Activated CD8-positive, alpha-beta T cell treated with anti-CD3 and anti-CD28 coated beads for 36 hours (primary cell): ENCODE measurements at regions of chr18 and their contacts with region 1.

Region 1: GRCh38 chr18:801137-801536 is 10.9 kb downstream of the YES1 start:
- DNase-seq: no peak
- ATAC-seq: no peak
- H3K4me3 Mint-ChIP-seq: no peak overlapping the region
- H3K27ac Mint-ChIP-seq: no peak overlapping the region
- H3K4me1 Mint-ChIP-seq: peaks cover 71% of the 10 kb centered on the region
- H3K27me3 Mint-ChIP-seq: no peaks in the 10 kb centered on the region
- CTCF ChIP-seq: no peak

Region 2: DNA sequence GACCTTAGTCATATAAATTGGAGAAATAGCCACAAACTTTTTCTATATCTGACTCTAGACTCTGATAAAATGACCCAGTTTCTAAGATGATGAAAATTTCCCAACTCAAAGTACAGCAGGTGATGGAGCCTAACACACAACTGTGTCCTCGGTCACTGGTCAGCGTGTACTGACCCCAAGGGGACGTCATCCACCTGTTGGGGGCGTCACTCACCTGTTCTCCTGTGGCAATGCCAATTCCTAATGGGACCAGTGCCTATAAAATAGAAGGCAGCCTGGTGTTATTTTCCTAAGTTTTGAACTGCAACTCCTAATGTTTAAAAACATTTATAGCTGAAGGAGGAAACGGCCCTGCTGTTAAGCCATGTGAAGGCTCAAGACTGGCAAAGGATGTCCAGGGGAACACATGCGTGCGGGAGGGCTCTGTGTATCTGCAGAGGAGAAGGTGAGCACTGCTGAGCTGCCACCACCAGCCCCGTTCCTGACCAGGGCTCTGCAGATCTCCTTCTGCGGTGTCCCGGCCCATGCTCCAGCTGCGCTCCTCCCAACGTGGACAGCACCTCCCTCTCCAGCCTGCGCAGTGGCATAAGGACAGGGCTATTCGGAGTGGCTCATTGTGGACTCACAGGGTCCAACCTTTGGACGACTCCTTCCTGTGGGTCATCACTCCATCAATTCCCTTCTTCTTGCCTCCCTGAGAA is 122.5 kb before region 1 on chr18:
- CTCF ChIA-PET with region 1: no interaction called
- POLR2A ChIA-PET with region 1: no interaction called
- intact Hi-C with region 1: no loop called
- DNase-seq: no peak
- ATAC-seq: no peak
- H3K4me3 Mint-ChIP-seq: no peak overlapping the region
- H3K27ac Mint-ChIP-seq: no peak overlapping the region
- H3K4me1 Mint-ChIP-seq: peaks cover 20% of the 10 kb centered on the region
- H3K27me3 Mint-ChIP-seq: no peaks in the 10 kb centered on the region
- CTCF ChIP-seq: no peak

Region 3: DNA sequence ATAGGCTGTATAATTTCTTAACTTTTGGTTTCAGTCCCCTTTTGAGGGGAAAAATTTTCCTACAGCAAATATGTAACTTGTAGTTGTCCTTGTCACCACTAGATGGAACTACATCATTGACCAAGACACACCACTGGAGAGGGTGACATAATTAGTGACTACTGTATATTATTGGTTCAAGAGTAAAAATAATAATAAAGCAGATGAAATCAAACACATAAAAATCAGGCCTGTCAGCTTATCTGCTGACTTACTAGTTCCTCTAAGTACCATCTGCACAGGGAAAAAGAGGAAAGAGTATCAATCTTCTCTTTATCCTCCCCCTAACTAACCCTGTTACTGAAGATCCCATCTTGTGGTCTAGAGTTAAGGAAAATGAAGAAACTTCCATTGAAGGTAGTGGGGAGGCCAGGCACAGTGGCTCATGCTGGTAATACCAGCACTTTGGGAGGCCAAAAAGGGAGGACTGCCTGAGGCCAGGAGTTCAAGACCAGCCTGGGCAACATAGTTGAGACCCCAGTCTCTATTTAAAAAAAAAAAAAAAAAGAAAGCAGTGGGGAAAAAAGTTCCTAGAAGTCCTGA is 59.1 kb before region 1 on chr18:
- CTCF ChIA-PET with region 1: interaction called, 10 read pairs
- POLR2A ChIA-PET with region 1: no interaction called
- intact Hi-C with region 1: no loop called
- DNase-seq: no peak
- ATAC-seq: peak; percentile 83
- H3K4me3 Mint-ChIP-seq: no peak overlapping the region
- H3K27ac Mint-ChIP-seq: no peak overlapping the region
- H3K4me1 Mint-ChIP-seq: peaks cover 2% of the 10 kb centered on the region
- H3K27me3 Mint-ChIP-seq: no peaks in the 10 kb centered on the region
- CTCF ChIP-seq: peak; percentile 74

Region 4: DNA sequence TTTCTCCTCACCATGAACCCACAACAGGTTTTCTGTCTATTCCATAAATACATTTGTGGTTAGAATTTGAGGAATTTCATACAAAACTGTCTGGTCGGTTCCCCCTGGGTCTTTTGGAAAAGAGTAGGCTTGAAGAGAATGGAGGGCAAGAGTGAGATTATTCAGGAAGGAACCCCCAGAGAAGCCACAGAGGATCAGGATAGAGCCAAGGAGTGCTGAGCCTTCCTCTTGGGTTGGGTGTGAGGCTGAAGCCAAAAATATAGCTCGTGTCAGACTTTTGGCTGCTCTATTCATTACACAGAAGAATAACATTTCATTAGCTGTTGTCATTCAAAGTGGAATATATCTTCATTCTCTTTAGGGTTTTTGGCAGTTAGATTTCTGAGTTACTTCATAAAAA is 56.8 kb after region 1 on chr18:
- CTCF ChIA-PET with region 1: no interaction called
- POLR2A ChIA-PET with region 1: no interaction called
- intact Hi-C with region 1: no loop called
- DNase-seq: no peak
- ATAC-seq: no peak
- H3K4me3 Mint-ChIP-seq: no peak overlapping the region
- H3K27ac Mint-ChIP-seq: no peak overlapping the region
- H3K4me1 Mint-ChIP-seq: no peaks in the 10 kb centered on the region
- H3K27me3 Mint-ChIP-seq: peaks cover 5% of the 10 kb centered on the region
- CTCF ChIP-seq: no peak

Region 5: GRCh38 chr18:1094409-1094808 is 293.3 kb after region 1 on chr18:
- CTCF ChIA-PET with region 1: no interaction called
- POLR2A ChIA-PET with region 1: no interaction called
- intact Hi-C with region 1: no loop called
- DNase-seq: no peak
- ATAC-seq: no peak
- H3K4me3 Mint-ChIP-seq: no peak overlapping the region
- H3K27ac Mint-ChIP-seq: no peak overlapping the region
- H3K4me1 Mint-ChIP-seq: no peaks in the 10 kb centered on the region
- H3K27me3 Mint-ChIP-seq: no peaks in the 10 kb centered on the region
- CTCF ChIP-seq: no peak